ENCODE measurements at regions of chr17 and their contacts with region 1.

Region 1: GRCh38 chr17:58020401-58020800 is 13.4 kb upstream of the SRSF1 start:
- DNase-seq: no peak
- ATAC-seq: no peak

Region 2: GRCh38 chr17:58092797-58093385 is 72.5 kb after region 1 on chr17:
- intact Hi-C with region 1: loop called (anchors 5 kb)
- DNase-seq: no peak
- ATAC-seq: no peak